ENCODE measurements at regions of chr14 and their contacts with region 1.

Region 1: GRCh38 chr14:57254884-57255283 is 13.8 kb downstream of the EXOC5 start:
- DNase-seq: no peak
- ATAC-seq: no peak
- H3K4me3 ChIP-seq: no peak overlapping the region
- H3K27ac ChIP-seq: no peak overlapping the region
- H3K4me1 ChIP-seq: no peaks in the 10 kb centered on the region
- H3K27me3 ChIP-seq: no peaks in the 10 kb centered on the region
- CTCF ChIP-seq: no peak

Region 2: DNA sequence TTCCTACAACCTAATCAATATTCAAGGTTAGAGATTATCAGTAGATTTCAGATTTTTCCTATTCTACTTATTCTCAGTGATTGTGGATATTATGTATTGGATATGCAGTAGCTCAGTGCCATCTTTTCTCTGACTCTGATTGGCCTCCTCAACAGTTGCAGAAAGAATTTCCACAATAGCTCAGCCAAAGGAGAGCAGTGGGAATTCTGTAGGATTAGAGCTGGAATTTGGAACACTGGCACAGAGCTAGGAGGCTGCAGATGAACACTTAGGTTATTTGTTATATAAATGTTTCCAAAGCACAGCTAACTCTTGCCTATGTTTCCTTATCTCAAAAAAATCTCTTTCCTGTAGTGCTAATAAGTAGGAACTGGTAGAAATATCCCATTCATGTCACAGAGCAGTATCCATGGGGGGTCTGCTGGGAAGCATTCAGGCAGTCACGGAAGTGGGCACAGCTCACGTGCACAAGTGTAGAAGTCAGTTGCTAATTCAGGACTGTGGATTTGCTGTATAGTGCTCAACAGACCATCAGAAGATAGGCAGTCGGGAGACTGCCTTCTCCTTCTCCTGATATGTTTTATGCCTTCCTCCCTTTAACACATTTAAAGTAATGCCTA is 791.5 kb before region 1 on chr14:
- CTCF ChIA-PET with region 1: no interaction called
- POLR2A ChIA-PET with region 1: interaction called, 24 read pairs
- in situ Hi-C with region 1: no loop called
- intact Hi-C with region 1: no loop called
- DNase-seq: no peak
- ATAC-seq: no peak
- H3K4me3 ChIP-seq: no peak overlapping the region
- H3K27ac ChIP-seq: no peak overlapping the region
- H3K4me1 ChIP-seq: no peaks in the 10 kb centered on the region
- H3K27me3 ChIP-seq: no peaks in the 10 kb centered on the region
- CTCF ChIP-seq: no peak